Transverse colon (tissue), 4 donors: ENCODE measurements at regions of chr3 and their contacts with region 1.

Region 1: GRCh38 chr3:151168269-151169094 is 34.5 kb downstream of the GPR171 start:
- DNase-seq: peak; percentile 87
- H3K4me3 ChIP-seq: no peak overlapping the region
- H3K27ac ChIP-seq: peak overlapping the region in 1 of 4 donors; percentile 57
- H3K4me1 ChIP-seq: peaks cover 0 to 19% (median 0%) of the 10 kb centered on the region in 4 donors
- H3K27me3 ChIP-seq: no peaks in the 10 kb centered on the region
- CTCF ChIP-seq: peak; percentile 73 to 79 (median 78)
- EP300 ChIP-seq: no peak
- POLR2A ChIP-seq: no peak

Region 2: DNA sequence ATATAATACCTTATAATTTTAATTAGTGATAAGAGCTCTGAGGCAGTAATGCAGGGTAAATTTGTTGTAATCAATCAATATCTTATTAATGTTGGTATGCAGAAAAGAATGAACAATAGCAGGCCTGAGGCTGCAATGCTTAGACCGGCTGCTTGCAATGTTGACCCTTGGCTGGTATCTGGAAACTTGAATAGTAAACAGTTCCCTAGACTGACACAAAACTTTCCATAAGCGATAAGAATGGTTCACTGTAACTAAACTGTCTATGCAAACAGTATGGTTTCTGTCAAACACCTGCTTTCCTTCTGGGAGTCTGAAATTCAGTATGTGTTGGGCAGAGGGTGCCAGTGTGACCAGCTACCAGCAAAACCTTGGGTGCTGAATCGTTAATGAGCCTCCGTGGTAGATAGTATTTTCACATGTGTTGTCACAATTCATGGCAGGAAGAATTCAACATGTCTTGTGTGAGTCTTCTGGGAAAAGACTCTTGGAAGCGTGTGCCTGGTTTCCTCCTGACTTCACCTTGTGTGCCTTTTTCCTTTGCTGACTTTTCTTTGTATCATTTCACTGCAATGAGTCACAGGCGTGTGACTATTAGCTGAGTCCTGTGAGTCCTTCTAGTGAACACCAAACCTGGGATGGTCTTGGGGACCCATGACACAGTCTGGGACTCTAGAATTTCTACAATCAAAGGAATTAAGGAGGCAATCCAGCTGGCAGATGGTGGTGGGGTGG is 165.3 kb before region 1 on chr3:
- in situ Hi-C with region 1: no loop called
- intact Hi-C with region 1: no loop called
- DNase-seq: no peak
- H3K4me3 ChIP-seq: no peak overlapping the region
- H3K27ac ChIP-seq: no peak overlapping the region
- H3K4me1 ChIP-seq: no peaks in the 10 kb centered on the region
- H3K27me3 ChIP-seq: no peaks in the 10 kb centered on the region
- CTCF ChIP-seq: no peak
- EP300 ChIP-seq: no peak
- POLR2A ChIP-seq: no peak

Region 3: DNA sequence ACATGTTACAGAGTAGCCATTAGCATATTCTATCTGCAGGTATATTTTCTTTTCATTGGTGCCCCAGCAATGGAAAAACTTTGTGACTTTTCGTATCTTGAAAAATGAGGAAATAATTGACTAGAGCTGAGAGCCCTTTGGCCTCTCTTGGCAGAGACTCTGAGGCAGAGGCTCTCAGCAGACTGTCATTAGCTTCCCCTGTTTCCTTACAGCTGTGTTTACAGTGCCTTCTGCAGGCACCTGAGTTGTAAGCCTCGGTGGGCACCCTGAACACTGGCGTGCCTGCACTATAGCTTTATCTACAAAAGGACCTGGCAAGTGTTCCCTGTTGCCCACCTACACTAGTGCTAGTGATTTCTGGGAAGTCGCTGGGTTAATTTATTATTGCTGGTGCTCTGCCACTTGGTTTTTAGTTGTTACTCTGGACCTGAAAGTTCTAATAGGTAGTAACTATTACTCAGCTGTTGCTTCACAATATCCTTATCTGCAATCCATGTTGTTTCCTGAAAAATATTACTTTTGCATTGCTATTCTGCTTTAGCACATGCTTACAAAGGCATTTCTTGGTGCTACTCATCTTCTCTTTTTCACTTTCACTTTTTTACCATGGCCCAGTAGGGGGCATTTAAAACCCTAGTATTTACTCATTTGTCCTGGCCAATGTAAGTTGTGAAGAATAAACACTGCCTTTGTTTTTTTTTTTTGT is 42.3 kb after region 1 on chr3:
- in situ Hi-C with region 1: loop called in 1 of 4 experiments (anchors 10 kb)
- intact Hi-C with region 1: no loop called
- DNase-seq: peak; percentile 36
- H3K4me3 ChIP-seq: peak overlapping the region in 1 of 4 donors; percentile 26
- H3K27ac ChIP-seq: peak overlapping the region in 3 of 4 donors; percentile 11 to 58 (median 53)
- H3K4me1 ChIP-seq: peaks cover 0 to 17% (median 8%) of the 10 kb centered on the region in 4 donors
- H3K27me3 ChIP-seq: no peaks in the 10 kb centered on the region
- CTCF ChIP-seq: no peak
- EP300 ChIP-seq: no peak
- POLR2A ChIP-seq: no peak

Region 4: GRCh38 chr3:151227807-151228665 is 59.6 kb after region 1 on chr3:
- in situ Hi-C with region 1: loop called in 1 of 4 experiments (anchors 10 kb)
- intact Hi-C with region 1: no loop called
- DNase-seq: peak; percentile 79
- H3K4me3 ChIP-seq: no peak overlapping the region
- H3K27ac ChIP-seq: peak overlapping the region; percentile 23 to 56 (median 45)
- H3K4me1 ChIP-seq: peaks cover 0 to 39% (median 6%) of the 10 kb centered on the region in 4 donors
- H3K27me3 ChIP-seq: no peaks in the 10 kb centered on the region
- CTCF ChIP-seq: peak; percentile 85 to 93 (median 92)
- EP300 ChIP-seq: no peak
- POLR2A ChIP-seq: no peak

Region 5: GRCh38 chr3:151276687-151277042 is 108.2 kb after region 1 on chr3:
- in situ Hi-C with region 1: loop called in 3 of 4 experiments (anchors 5 to 10 kb)
- intact Hi-C with region 1: loop called (anchors 5 kb)
- DNase-seq: no peak
- H3K4me3 ChIP-seq: peak overlapping the region in 1 of 4 donors; percentile 19
- H3K27ac ChIP-seq: peak overlapping the region; percentile 38 to 60 (median 52)
- H3K4me1 ChIP-seq: peaks cover 0 to 7% (median 0%) of the 10 kb centered on the region in 4 donors
- H3K27me3 ChIP-seq: no peaks in the 10 kb centered on the region
- CTCF ChIP-seq: no peak
- EP300 ChIP-seq: no peak
- POLR2A ChIP-seq: no peak

Region 6: GRCh38 chr3:151282921-151283320 is 114.4 kb after region 1 on chr3:
- in situ Hi-C with region 1: loop called (anchors 5 to 10 kb)
- intact Hi-C with region 1: loop called (anchors 5 kb)
- DNase-seq: no peak
- H3K4me3 ChIP-seq: no peak overlapping the region
- H3K27ac ChIP-seq: peak overlapping the region in 3 of 4 donors; percentile 14 to 47 (median 25)
- H3K4me1 ChIP-seq: peaks cover 0 to 22% (median 8%) of the 10 kb centered on the region in 4 donors
- H3K27me3 ChIP-seq: no peaks in the 10 kb centered on the region
- CTCF ChIP-seq: peak; percentile 65 to 85 (median 69)
- EP300 ChIP-seq: no peak
- POLR2A ChIP-seq: no peak

Region 7: DNA sequence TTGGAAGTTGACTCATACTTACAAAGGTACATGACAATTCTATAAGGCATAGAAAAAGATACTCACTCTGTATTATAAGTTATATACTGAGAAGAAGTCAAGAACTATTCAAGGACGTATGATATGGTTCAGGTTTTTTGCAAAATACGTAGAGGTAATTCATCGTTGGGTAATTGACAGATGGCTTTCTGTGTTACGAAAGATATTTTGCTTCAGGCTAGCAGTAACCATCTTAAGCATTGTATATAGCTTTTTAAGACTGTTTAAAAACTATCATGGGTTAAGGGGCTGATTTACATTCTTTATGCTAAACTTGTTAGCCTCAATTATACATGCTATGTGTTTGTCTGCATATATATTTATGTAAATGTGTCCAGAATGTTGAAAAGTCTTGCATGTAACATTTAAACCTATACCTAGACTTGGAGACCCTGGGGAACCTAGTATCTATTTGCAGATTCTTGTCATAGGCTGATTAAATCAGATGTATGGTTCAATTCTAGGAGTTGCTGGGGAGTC is 120.9 kb after region 1 on chr3:
- in situ Hi-C with region 1: loop called in 2 of 4 experiments (anchors 5 to 10 kb)
- intact Hi-C with region 1: loop called (anchors 5 kb)
- DNase-seq: no peak
- H3K4me3 ChIP-seq: no peak overlapping the region
- H3K27ac ChIP-seq: no peak overlapping the region
- H3K4me1 ChIP-seq: peaks cover 0 to 1% (median under 1%) of the 10 kb centered on the region in 4 donors
- H3K27me3 ChIP-seq: no peaks in the 10 kb centered on the region
- CTCF ChIP-seq: no peak
- EP300 ChIP-seq: no peak
- POLR2A ChIP-seq: no peak

Region 8: DNA sequence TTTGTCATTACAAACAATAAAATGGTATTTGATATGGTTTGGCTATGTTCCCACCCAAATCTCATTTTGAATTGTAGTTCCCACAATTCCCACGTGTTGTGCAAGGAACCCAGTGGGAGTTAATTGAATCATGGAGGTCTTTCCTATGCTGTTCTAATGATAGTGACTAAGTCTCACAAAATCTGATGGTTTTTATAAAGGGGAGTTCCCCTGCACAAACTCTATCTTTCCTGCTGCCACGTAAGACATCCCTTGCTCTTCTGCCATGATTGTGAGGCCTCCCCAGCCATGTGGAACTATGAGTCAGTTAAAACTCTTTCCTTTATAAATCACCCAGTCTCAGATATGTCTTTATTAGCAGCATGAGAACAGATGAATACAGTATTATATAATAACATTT is 630.0 kb after region 1 on chr3:
- in situ Hi-C with region 1: no loop called
- intact Hi-C with region 1: no loop called
- DNase-seq: no peak
- H3K4me3 ChIP-seq: no peak overlapping the region
- H3K27ac ChIP-seq: no peak overlapping the region
- H3K4me1 ChIP-seq: peaks cover 0 to 4% (median 0%) of the 10 kb centered on the region in 4 donors
- H3K27me3 ChIP-seq: no peaks in the 10 kb centered on the region
- CTCF ChIP-seq: no peak
- EP300 ChIP-seq: no peak
- POLR2A ChIP-seq: no peak